Left cardiac atrium (tissue), 4 donors: ENCODE measurements at regions of chr9 and their contacts with region 1.

Region 1: GRCh38 chr9:75890472-75891276 is at the start of gene PCSK5:
- DNase-seq: peak; percentile 91
- ATAC-seq: peak; percentile 95 to 97
- total RNA-seq, gene PCSK5: 7.9 to 9.3 TPM

Region 2: GRCh38 chr9:75130621-75131230 is 759.9 kb before region 1 on chr9:
- intact Hi-C with region 1: no loop called
- DNase-seq: no peak
- ATAC-seq: no peak

Region 3: GRCh38 chr9:75953218-75953617 is 62.5 kb after region 1 on chr9:
- intact Hi-C with region 1: loop called in 1 of 2 experiments (anchors 5 kb)
- DNase-seq: no peak
- ATAC-seq: peak; percentile 38 to 85